Activated T-helper 2 cell treated with anti-CD3 and anti-CD28 coated beads, Interferon-gamma antibody, Interleukin-2, Interleukin-4, amounts not matched to agents 10 μg/mL and 5 μg/mL and 100 μg/mL, durations not matched to agents 14 hours and 24 hours and 36 hours (primary cell): ENCODE measurements at regions of chr12 and their contacts with region 1.

Region 1: GRCh38 chr12:9244894-9245293 is 36.7 kb upstream of the PZP start:
- DNase-seq: peak; percentile 13
- H3K4me3 Mint-ChIP-seq: no peak overlapping the region
- H3K27ac Mint-ChIP-seq: peak overlapping the region; percentile 95
- H3K4me1 Mint-ChIP-seq: peaks cover 39% of the 10 kb centered on the region
- H3K27me3 Mint-ChIP-seq: peaks cover 11% of the 10 kb centered on the region

Region 2: DNA sequence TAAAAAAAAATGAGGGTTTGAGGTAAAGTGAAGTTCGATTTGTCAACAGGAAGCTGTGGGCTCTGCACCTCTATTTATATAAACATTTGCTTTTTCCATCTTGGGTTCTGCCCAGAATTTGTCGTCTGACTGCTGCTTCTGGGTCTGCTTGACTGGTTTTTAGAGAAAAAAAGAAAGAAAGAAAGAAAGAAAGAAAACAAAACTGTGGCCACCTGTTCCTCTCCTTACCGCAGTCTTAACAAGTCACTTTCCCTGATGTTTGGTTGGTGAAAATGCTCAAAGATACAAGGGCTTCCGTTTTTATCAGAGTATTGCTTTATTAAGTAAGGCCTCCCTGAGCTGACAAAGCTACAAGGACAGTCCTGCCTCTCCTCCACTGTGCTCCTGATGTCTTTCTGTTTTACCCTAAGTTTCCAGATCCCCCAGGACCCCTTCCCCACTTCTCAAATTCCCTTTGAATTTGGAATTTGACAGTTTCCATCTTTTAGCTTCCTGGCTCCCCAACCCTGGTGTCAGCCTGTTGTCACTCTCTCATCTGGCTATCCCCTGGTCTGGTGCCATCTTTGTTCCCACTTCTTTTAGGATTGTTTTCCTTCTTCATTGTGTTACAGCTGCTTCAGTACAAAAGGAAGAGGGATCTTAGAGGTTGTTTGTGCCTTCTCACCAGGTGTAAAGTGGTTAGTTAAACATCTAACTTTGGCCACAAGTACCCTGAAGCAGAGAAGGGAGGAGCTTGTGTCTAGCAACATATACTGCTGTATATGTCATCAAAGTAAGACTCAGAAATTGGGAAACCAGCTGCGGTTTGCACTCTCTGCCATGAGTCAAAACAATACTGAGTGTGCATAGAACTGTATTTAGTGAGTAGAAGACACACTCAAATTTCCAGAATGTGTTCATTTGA is 600.3 kb before region 1 on chr12:
- intact Hi-C with region 1: loop called (anchors 5 kb)
- DNase-seq: peak; percentile 46
- H3K4me3 Mint-ChIP-seq: peak overlapping the region; percentile 31
- H3K27ac Mint-ChIP-seq: peak overlapping the region; percentile 34
- H3K4me1 Mint-ChIP-seq: peaks cover 35% of the 10 kb centered on the region
- H3K27me3 Mint-ChIP-seq: peaks cover 41% of the 10 kb centered on the region

Region 3: DNA sequence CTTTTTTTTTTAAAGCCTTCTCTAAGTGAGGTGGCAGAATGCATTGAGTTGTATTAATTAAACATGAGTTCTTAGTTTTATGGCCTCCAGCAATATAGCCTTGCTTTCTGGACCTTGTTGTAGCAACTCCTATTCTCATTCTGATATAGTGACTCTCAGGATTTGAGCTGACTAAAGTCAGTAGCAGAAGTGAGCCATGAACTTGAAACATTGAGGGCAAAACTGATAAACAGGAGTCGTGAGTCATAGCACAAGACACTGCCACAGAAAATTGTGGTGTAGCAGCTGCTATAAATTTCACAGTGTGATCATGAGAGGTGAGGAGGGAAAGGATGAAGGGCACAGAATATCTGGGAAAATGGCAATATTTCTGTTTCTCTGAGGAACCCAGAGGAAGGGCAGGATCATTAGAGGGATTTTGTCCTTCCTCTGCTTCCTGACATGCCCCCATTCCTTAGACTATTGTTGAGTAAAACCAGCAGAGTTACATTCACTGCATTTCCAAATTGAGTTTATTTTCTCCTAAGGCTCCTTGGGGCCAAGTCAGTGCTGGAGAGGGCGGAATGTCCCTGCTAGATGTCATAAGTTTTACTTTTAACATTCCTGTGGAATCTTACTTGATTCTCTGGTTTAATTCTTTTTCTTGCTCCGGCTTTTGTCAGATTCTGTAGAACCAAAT is 248.1 kb before region 1 on chr12:
- intact Hi-C with region 1: loop called (anchors 1 kb)
- DNase-seq: no peak
- H3K4me3 Mint-ChIP-seq: no peak overlapping the region
- H3K27ac Mint-ChIP-seq: no peak overlapping the region
- H3K4me1 Mint-ChIP-seq: peaks cover 25% of the 10 kb centered on the region
- H3K27me3 Mint-ChIP-seq: peaks cover 34% of the 10 kb centered on the region